Activated B cell treated with CpG ODN at 0.5 μM for 24 hours (primary cell): ENCODE measurements at regions of chr6 and their contacts with region 1.

Region 1: GRCh38 chr6:95577304-95578105 is at the start of gene MANEA:
- DNase-seq: peak; percentile 73
- ATAC-seq: peak; percentile 86
- H3K4me3 Mint-ChIP-seq: peak within 1 kb of the TSS; percentile 98
- H3K27ac Mint-ChIP-seq: peak within 1 kb of the TSS; percentile 98
- H3K4me1 Mint-ChIP-seq: peaks cover 33% of the 10 kb centered on the region
- H3K27me3 Mint-ChIP-seq: no peaks in the 10 kb centered on the region
- CTCF ChIP-seq: no peak
- total RNA-seq, gene MANEA: 5.0 and 7.5 TPM in 2 replicates

Region 2: DNA sequence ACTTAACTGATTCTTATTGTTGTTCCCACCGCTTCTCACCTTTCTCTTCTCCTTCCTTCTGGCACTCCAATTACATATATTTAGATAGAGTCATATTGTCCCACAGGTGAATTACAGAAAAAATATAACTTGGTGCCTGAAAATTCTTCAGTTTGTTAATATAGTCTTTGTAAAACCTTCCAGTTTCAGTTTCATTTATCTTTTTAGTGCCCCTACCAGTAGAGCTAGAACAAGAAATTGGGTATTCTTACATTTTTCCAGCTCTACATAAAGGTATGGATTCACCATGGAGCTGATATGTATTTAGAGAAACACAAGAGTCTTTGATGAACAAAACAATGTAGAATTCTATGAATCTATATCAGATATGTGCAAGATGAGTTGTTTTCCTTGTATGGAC is 10.5 kb after region 1 on chr6:
- CTCF ChIA-PET with region 1: no interaction called
- POLR2A ChIA-PET with region 1: interaction called, 6 read pairs
- intact Hi-C with region 1: loop called (anchors 1 kb)
- DNase-seq: no peak
- ATAC-seq: no peak
- H3K4me3 Mint-ChIP-seq: peak overlapping the region; percentile 8
- H3K27ac Mint-ChIP-seq: no peak overlapping the region
- H3K4me1 Mint-ChIP-seq: peaks cover 11% of the 10 kb centered on the region
- H3K27me3 Mint-ChIP-seq: no peaks in the 10 kb centered on the region
- CTCF ChIP-seq: no peak

Region 3: GRCh38 chr6:96923871-96924493 is 1346.5 kb after region 1 on chr6:
- CTCF ChIA-PET with region 1: no interaction called
- POLR2A ChIA-PET with region 1: no interaction called
- intact Hi-C with region 1: loop called (anchors 1 kb)
- DNase-seq: no peak
- ATAC-seq: peak; percentile 10
- H3K4me3 Mint-ChIP-seq: peak overlapping the region; percentile 94
- H3K27ac Mint-ChIP-seq: peak overlapping the region; percentile 92
- H3K4me1 Mint-ChIP-seq: peaks cover 24% of the 10 kb centered on the region
- H3K27me3 Mint-ChIP-seq: peaks cover 3% of the 10 kb centered on the region
- CTCF ChIP-seq: no peak